ENCODE measurements at regions of chr12 and their contacts with region 1.

Region 1: DNA sequence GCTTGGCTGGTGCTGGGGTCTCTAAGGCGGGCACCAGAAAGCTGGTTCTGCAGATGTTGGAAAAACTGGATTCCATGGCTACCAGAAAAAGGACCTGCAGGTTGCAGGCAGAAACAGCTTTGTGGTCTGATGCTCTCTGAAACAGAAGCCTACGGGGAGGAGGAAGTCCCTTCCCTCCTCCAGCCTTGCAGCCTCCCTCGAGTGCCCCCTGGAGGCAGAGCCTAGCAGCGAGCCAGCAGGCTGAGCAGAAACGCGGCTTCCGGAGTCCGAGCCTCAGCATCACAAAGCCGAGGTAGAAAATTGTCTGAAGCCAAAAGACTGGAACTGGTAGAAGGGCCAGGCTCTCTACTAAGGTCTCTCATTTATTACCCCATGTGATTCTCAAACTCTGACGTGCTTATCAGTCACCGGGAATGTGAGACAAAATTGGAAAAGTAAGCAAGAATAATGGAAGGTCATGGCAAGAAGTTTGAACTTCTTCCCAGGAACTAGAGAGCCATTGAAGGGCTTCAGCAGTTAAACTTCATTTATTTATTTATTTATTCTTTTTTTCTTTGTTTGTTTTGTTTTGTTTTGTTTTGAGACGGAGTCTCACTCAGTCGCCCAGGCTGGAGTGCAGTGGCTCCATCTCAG is 82.2 kb upstream of the CPSF6 start:
- DNase-seq: peak; percentile 90 to 94
- H3K4me3 ChIP-seq: no peak overlapping the region
- H3K27ac ChIP-seq: no peak overlapping the region
- H3K4me1 ChIP-seq: peaks cover 0 to 18% (median 6%) of the 10 kb centered on the region in 4 donors
- H3K27me3 ChIP-seq: no peaks in the 10 kb centered on the region
- CTCF ChIP-seq: peak in 5 of 7 experiments; percentile 73 to 88 (median 76)
- EP300 ChIP-seq: no peak
- POLR2A ChIP-seq: no peak

Region 2: GRCh38 chr12:69254046-69254445 is 96.9 kb after region 1 on chr12:
- intact Hi-C with region 1: loop called (anchors 10 kb)
- DNase-seq: peak in 1 of 2 donors; percentile 60
- H3K4me3 ChIP-seq: no peak overlapping the region
- H3K27ac ChIP-seq: no peak overlapping the region
- H3K4me1 ChIP-seq: peaks cover 0 to 49% (median 15%) of the 10 kb centered on the region in 4 donors
- H3K27me3 ChIP-seq: no peaks in the 10 kb centered on the region
- CTCF ChIP-seq: peak in 5 of 7 experiments; percentile 13 to 67 (median 54)
- EP300 ChIP-seq: no peak
- POLR2A ChIP-seq: no peak

Region 3: DNA sequence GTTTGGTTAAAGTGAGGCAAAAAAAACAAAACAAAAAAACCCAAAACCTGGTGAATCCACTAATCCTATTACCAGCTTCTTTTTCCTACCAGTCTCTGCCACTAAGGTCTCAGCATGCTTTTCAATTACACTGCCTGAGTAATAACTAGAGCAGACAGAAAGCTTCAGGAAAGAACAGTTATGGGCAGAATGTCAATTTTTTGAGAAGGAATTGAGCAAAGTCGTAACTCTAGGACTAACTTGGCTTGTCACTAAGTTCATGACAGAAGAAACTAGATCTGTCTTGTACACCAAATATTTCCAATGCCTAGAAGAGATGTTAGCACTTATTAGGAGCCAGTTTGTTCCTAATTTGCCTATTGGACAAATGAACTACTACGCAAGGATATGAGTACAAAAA is 937.3 kb after region 1 on chr12:
- intact Hi-C with region 1: no loop called
- DNase-seq: no peak
- H3K4me3 ChIP-seq: no peak overlapping the region
- H3K27ac ChIP-seq: no peak overlapping the region
- H3K4me1 ChIP-seq: no peaks in the 10 kb centered on the region
- H3K27me3 ChIP-seq: no peaks in the 10 kb centered on the region
- CTCF ChIP-seq: no peak
- EP300 ChIP-seq: no peak
- POLR2A ChIP-seq: no peak